HEK293T (cell line): ENCODE measurements at regions of chr12 and their contacts with region 1.

Region 1: GRCh38 chr12:58920102-58920960 is at the start of gene LRIG3:
- DNase-seq: peak; percentile 83

Region 2: DNA sequence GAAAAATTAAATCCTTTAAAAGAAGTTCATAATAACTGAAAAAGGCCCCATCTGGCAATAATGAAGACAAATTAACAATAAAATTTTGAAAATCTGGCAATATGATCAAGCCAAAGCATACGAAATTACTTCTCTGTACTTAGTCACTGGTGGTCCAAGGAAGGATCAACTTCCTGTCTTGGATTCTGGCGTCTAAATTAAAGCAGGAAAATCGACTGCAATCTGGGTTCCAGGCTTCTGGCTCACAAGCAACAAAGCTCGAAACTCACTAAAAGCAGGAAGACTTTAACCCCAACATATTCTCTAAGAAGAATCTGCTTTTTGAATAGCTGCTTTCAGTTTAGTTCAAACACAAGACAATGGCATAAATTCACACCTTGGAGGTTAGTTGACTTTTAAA is 49.7 kb before region 1 on chr12:
- CTCF ChIA-PET with region 1: no interaction called
- POLR2A ChIA-PET with region 1: no interaction called
- DNase-seq: no peak

Region 3: DNA sequence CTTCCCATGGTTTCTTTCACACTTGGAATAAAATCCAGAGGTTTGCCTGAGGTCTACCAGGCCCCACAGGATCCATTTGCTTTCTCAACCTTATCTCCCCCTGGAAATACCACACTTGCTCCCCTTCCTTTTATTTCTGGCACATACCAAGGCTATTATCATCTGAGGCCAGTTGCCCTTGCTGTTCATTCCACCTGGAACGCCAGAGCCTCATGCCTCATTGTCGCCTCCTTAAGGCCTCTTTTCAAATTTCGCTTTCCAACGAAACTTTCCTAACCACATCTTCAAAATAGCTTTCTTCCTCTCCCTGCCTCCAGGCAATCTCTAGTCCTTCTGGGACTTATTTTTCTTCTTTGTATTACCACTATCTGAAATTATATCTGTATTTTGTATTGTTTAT is 11.2 kb after region 1 on chr12:
- CTCF ChIA-PET with region 1: no interaction called
- POLR2A ChIA-PET with region 1: interaction called, 15 read pairs
- DNase-seq: no peak